IMR-90 (cell line): ENCODE measurements at regions of chr14 and their contacts with region 1.

Region 1: DNA sequence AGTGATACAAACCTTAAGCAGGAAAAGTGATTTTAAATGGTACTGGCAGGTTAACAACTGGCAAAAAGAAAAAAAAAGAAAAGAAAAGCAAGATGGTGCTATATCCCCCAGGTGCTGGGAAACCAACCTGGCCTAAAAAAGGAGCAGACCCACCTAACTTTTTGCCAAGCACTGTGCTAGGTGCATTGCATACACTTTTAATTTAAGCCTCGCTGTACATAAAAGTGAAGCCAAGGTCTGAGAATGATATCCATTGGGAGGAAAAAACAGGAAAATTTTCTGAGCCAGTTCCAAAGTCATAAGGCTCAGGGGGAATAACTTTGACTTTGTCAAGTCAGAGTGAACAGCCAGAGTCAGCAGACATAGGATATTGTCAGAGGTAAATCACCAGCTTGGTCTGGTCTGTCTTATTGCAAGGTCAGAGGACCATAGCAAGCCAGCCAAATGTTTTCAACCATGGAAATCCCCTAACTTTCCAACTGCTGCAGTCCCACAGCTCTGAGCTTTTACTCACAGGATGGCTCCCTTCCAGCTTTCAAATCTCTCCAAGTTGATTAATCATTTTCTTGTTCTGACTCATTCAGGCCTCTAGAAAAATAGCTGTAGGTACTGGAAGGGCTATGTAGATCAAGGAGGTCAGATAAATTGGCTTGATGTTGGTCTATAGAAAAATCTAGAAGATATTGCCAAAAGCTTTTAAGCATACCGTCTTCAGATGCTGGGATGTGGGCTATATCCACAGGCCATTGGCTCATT is 412.9 kb downstream of the RAD51B start:
- DNase-seq: peak; percentile 99
- ATAC-seq: peak; percentile 85
- H3K4me3 ChIP-seq: no peak overlapping the region
- H3K27ac ChIP-seq: peak overlapping the region; percentile 84
- H3K4me1 ChIP-seq: peaks cover 16% of the 10 kb centered on the region
- H3K27me3 ChIP-seq: no peaks in the 10 kb centered on the region
- CTCF ChIP-seq: no peak; the same call in 1 of the 2 replicates
- POLR2A ChIP-seq: 0 out of 2 replicates have a peak, but pooled peaks have one; percentile 21
- RAD21 ChIP-seq: peak; percentile 24; the same call in 1 of the 2 replicates

Region 2: GRCh38 chr14:68020999-68021663 is 211.3 kb before region 1 on chr14:
- CTCF ChIA-PET with region 1: no interaction called
- POLR2A ChIA-PET with region 1: no interaction called
- dilution Hi-C with region 1: no loop called
- in situ Hi-C with region 1: no loop called
- intact Hi-C with region 1: no loop called
- DNase-seq: no peak
- ATAC-seq: no peak
- H3K4me3 ChIP-seq: no peak overlapping the region
- H3K27ac ChIP-seq: no peak overlapping the region
- H3K4me1 ChIP-seq: peaks cover 1% of the 10 kb centered on the region; the same call in 1 of the 2 replicates
- H3K27me3 ChIP-seq: no peaks in the 10 kb centered on the region
- CTCF ChIP-seq: no peak
- POLR2A ChIP-seq: no peak
- RAD21 ChIP-seq: no peak

Region 3: GRCh38 chr14:68084256-68084655 is 148.2 kb before region 1 on chr14:
- CTCF ChIA-PET with region 1: no interaction called
- POLR2A ChIA-PET with region 1: no interaction called
- dilution Hi-C with region 1: no loop called
- in situ Hi-C with region 1: no loop called
- intact Hi-C with region 1: loop called (anchors 5 kb)
- DNase-seq: peak; percentile 45
- ATAC-seq: peak; percentile 48
- H3K4me3 ChIP-seq: no peak overlapping the region
- H3K27ac ChIP-seq: no peak overlapping the region
- H3K4me1 ChIP-seq: peaks cover 8% of the 10 kb centered on the region
- H3K27me3 ChIP-seq: no peaks in the 10 kb centered on the region
- CTCF ChIP-seq: peak; percentile 42
- POLR2A ChIP-seq: no peak
- RAD21 ChIP-seq: peak; percentile 65

Region 4: GRCh38 chr14:68146807-68147206 is 85.7 kb before region 1 on chr14:
- CTCF ChIA-PET with region 1: no interaction called
- POLR2A ChIA-PET with region 1: no interaction called
- dilution Hi-C with region 1: no loop called
- in situ Hi-C with region 1: loop called (anchors 5 kb)
- intact Hi-C with region 1: loop called (anchors 5 kb)
- DNase-seq: peak; percentile 96
- ATAC-seq: peak; percentile 94
- H3K4me3 ChIP-seq: no peak overlapping the region
- H3K27ac ChIP-seq: no peak overlapping the region
- H3K4me1 ChIP-seq: peaks cover 14% of the 10 kb centered on the region
- H3K27me3 ChIP-seq: no peaks in the 10 kb centered on the region
- CTCF ChIP-seq: no peak
- POLR2A ChIP-seq: no peak
- RAD21 ChIP-seq: no peak

Region 5: DNA sequence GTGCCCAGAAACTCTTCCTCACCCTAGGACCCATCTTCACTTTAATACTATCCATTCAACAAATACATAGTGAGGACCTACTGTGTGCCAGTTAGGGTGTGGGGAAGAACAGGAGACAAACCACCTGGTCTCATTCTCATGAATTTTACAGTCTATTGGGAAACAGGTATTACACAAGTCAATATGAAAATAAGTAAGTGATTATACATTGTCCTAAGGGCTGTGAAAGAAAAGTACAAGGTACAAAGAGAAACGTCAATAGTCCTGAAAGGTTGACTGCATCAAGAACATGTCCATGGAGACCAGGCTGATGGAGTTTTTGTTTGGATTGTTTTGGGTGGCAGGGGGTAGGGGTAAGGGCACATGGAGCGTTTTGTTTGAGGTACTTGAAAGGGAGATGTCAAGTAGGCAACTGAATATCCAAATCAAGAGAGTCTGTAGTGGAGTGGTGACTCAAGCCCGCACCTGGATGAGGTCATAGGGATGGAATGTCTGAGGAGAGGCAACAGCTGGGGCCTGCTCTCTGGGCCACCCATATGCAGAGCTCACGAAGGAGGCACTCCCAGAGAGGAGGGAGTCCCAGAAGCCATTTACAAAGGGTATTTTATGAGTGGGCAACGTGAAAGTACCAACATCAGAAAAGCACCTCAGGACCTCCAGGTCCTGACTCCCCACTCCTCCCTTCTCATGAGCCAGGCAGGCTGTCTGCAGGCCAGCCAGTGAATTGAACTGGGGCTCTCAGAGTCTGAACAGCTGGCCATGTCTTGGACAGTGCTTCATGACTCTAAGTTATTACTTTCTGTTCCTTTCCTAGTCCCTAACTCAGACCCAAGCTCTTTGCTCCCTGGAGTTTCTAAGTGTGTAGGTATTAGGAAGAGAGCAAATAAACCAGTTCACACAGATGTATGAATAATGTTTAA is 288.4 kb after region 1 on chr14:
- CTCF ChIA-PET with region 1: no interaction called
- POLR2A ChIA-PET with region 1: no interaction called
- dilution Hi-C with region 1: no loop called
- in situ Hi-C with region 1: no loop called
- intact Hi-C with region 1: no loop called
- DNase-seq: no peak
- ATAC-seq: no peak
- H3K4me3 ChIP-seq: no peak overlapping the region
- H3K27ac ChIP-seq: no peak overlapping the region
- H3K4me1 ChIP-seq: peaks cover 9% of the 10 kb centered on the region; the same call in 1 of the 2 replicates
- H3K27me3 ChIP-seq: no peaks in the 10 kb centered on the region
- CTCF ChIP-seq: no peak
- POLR2A ChIP-seq: no peak
- RAD21 ChIP-seq: no peak